Left colon (tissue), 2 donors: ENCODE measurements at regions of chrX and their contacts with region 1.

Region 1: GRCh38 chrX:31658360-31658759 is 586.5 kb upstream of the FTHL17 start:
- DNase-seq: no peak
- ATAC-seq: peak; percentile 47

Region 2: GRCh38 chrX:31057291-31057690 is 601.1 kb before region 1 on chrX:
- intact Hi-C with region 1: loop called in 1 of 2 experiments (anchors 10 kb)
- DNase-seq: no peak
- ATAC-seq: no peak

Region 3: DNA sequence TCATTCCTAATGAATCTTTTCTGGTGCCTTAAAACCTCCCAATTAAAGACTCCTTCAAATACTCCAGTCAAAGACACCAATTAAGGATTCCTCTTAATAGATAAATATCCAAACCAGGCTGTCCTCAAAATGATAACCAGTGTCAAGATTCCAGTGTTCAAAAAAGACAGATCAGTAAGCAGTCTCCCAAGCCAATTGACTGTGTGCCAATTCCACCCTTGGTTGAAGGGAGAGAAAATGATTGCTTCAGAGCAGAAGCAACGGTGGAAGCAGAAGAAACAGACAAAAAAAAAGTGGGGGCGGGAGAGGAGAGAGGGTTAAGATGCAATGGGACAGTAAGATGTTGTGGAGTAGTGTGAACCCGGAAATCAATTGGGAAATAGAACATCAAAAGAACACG is 370.5 kb before region 1 on chrX:
- intact Hi-C with region 1: loop called in 1 of 2 experiments (anchors 10 kb)
- DNase-seq: no peak
- ATAC-seq: no peak